Activated CD4-positive, alpha-beta T cell treated with anti-CD3 and anti-CD28 coated beads, Interleukin-2, amount 10 ng/mL, durations not matched to agents 7 days and 5 days (primary cell): ENCODE measurements at regions of chr12 and their contacts with region 1.

Region 1: GRCh38 chr12:49740930-49741881 is at the start of gene TMBIM6:
- DNase-seq: peak; percentile 100
- H3K4me3 Mint-ChIP-seq: peak within 1 kb of the TSS; percentile 82
- H3K27ac Mint-ChIP-seq: peak within 1 kb of the TSS; percentile 96
- H3K4me1 Mint-ChIP-seq: peaks cover 36% of the 10 kb centered on the region
- H3K27me3 Mint-ChIP-seq: no peaks in the 10 kb centered on the region
- total RNA-seq, gene TMBIM6: 426 to 442 TPM

Region 2: GRCh38 chr12:49644620-49644994 is 96.6 kb before region 1 on chr12:
- CTCF ChIA-PET with region 1: interaction called, 14 read pairs
- POLR2A ChIA-PET with region 1: no interaction called
- DNase-seq: peak; percentile 87
- H3K4me3 Mint-ChIP-seq: no peak overlapping the region
- H3K27ac Mint-ChIP-seq: peak overlapping the region; percentile 87
- H3K4me1 Mint-ChIP-seq: peaks cover 40% of the 10 kb centered on the region
- H3K27me3 Mint-ChIP-seq: no peaks in the 10 kb centered on the region

Region 3: DNA sequence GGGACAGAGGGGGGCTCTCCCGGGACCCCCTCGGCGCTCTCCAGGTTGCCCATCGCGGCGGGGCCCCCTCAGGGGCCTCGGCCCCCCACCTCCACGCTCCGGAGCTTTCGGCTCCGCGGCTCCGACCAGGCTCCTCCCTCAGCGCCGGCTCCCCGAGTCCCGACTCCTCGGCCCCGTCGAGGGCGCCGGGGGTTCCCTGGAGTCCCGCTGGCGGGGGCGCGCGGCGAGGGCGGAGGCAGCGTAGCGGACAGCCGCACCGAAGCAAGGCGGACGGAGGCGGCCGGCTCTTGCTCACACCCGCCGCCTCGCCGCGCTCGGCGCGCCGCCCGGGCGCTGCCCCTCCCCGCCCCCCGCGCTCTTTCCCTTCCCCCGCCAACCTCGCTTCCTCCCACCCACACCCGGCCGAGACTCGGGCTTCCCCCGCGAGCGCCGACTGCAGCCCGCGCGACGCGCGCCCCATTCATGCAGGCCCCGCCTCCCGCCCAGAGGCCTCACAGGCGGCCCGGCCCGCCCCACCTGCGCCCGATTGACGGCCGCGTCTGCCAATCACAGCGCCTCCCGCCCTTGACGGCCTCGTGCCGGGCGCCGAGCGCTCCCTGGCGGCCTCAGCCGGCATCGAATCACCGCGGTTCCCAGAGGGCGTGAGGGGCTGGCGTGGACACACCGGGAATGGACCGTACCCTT is 33.9 kb before region 1 on chr12 and contains the start of gene FMNL3:
- CTCF ChIA-PET with region 1: interaction called, 25 read pairs
- POLR2A ChIA-PET with region 1: no interaction called
- DNase-seq: peak; percentile 98
- H3K4me3 Mint-ChIP-seq: peak within 1 kb of the TSS; percentile 90
- H3K27ac Mint-ChIP-seq: peak within 1 kb of the TSS; percentile 88
- H3K4me1 Mint-ChIP-seq: peaks cover 44% of the 10 kb centered on the region
- H3K27me3 Mint-ChIP-seq: peaks cover 26% of the 10 kb centered on the region
- total RNA-seq, gene FMNL3: 37.4 to 38.2 TPM

Region 4: DNA sequence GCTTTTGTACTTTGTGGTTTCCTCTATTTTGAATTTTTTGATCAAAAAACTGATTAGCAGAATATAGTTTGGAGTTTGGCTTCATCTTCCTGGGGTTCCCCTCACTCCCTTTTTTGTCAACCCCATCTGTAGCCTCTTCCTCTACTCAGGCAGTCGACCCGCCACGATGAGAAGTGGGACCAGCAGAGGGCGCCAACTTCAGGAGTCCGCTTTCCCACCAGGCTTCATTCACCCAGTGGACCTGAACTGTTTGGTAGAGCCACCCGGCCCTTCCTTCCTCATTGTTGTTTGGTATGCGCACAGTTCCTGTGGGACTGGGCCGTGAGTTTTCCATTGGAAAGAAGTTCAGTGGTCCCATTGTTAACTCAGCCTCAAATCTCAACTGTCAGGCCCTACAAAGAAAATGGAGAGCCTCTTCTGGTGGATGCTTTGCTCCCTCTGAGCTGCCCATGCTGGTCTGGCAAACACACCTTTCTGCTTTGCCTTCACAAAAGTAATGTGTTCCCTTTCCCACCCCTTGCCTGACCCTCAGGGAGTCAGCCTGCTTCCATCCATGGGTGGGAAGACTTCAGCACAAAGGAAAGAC is 21.9 kb after region 1 on chr12:
- CTCF ChIA-PET with region 1: interaction called, 26 read pairs
- POLR2A ChIA-PET with region 1: interaction called, 8 read pairs
- DNase-seq: peak; percentile 81
- H3K4me3 Mint-ChIP-seq: peak overlapping the region; percentile 8
- H3K27ac Mint-ChIP-seq: peak overlapping the region; percentile 83
- H3K4me1 Mint-ChIP-seq: peaks cover 53% of the 10 kb centered on the region
- H3K27me3 Mint-ChIP-seq: no peaks in the 10 kb centered on the region